ENCODE measurements at regions of chr1 and their contacts with region 1.

Region 1: DNA sequence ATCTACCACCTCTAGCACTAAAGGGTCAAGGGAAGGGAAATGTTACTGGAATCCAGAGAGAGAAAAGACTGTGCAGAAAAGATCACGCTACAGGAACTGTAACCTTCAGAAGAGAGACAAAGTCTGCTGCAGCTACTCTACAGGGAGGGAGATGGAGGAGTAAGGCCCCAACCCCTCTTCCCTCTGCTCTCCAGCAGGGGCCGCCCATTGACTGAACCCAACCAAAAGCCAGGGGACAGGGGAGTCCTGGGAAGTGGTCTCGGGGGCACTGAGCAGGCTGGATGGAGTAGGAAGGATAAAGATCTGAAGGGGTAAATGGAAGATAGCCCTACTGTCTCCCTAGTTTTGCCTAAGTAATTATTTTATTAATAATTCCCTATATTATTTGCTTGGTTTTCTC is 72.8 kb upstream of the NR5A2 start:
- DNase-seq: peak; percentile 74
- H3K4me3 ChIP-seq: no peak overlapping the region
- H3K27ac ChIP-seq: no peak overlapping the region
- H3K4me1 ChIP-seq: peaks cover 13% of the 10 kb centered on the region
- CTCF ChIP-seq: peak; percentile 95

Region 2: DNA sequence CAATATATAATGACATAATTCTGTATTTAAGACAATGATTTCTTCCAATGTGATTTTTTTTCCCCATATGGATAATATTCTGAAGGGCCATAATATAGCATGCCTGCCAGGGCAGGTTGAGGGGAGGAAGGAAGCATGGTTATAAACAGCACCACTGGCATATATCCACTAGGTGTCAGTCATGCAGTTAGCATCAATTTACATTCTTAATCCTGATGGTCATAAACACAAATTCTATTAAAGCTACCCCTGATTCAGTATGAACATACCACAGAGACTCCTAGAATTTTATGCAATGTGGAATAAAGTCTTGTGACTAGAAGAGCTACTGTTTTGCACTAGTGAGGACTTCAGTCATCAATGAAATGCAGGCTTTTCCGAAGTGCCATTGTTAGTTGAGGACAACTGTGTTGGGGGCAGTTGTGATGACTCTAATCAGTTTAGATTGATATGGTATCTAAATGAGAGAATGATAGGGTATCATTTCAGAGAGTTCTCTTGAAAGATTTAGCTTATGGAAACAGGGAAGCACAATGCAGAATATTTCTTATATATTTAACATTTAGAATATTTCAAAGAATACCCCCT is 269.9 kb before region 1 on chr1:
- CTCF ChIA-PET with region 1: no interaction called
- POLR2A ChIA-PET with region 1: no interaction called
- intact Hi-C with region 1: loop called (anchors 5 kb)
- DNase-seq: peak; percentile 62
- H3K4me3 ChIP-seq: no peak overlapping the region
- H3K27ac ChIP-seq: no peak overlapping the region
- H3K4me1 ChIP-seq: no peaks in the 10 kb centered on the region
- CTCF ChIP-seq: peak; percentile 93

Region 3: GRCh38 chr1:199976496-199977144 is 21.9 kb after region 1 on chr1:
- CTCF ChIA-PET with region 1: interaction called, 3 read pairs
- POLR2A ChIA-PET with region 1: interaction called, 3 read pairs
- intact Hi-C with region 1: loop called (anchors 2 kb)
- DNase-seq: peak; percentile 18
- H3K4me3 ChIP-seq: peak overlapping the region; percentile 31
- H3K27ac ChIP-seq: peak overlapping the region; percentile 98
- H3K4me1 ChIP-seq: peaks cover 60% of the 10 kb centered on the region
- CTCF ChIP-seq: no peak

Region 4: GRCh38 chr1:200038981-200039848 is 84.5 kb after region 1 on chr1:
- CTCF ChIA-PET with region 1: no interaction called
- POLR2A ChIA-PET with region 1: interaction called, 5 read pairs
- intact Hi-C with region 1: loop called (anchors 2 kb)
- DNase-seq: peak; percentile 31
- H3K4me3 ChIP-seq: peak overlapping the region; percentile 68
- H3K27ac ChIP-seq: no peak overlapping the region
- H3K4me1 ChIP-seq: peaks cover 6% of the 10 kb centered on the region
- CTCF ChIP-seq: no peak

Region 5: GRCh38 chr1:200258447-200259375 is 304.0 kb after region 1 on chr1:
- CTCF ChIA-PET with region 1: no interaction called
- POLR2A ChIA-PET with region 1: no interaction called
- intact Hi-C with region 1: loop called (anchors 5 kb)
- DNase-seq: peak; percentile 75
- H3K4me3 ChIP-seq: no peak overlapping the region
- H3K27ac ChIP-seq: no peak overlapping the region
- H3K4me1 ChIP-seq: no peaks in the 10 kb centered on the region
- CTCF ChIP-seq: peak; percentile 78

Region 6: DNA sequence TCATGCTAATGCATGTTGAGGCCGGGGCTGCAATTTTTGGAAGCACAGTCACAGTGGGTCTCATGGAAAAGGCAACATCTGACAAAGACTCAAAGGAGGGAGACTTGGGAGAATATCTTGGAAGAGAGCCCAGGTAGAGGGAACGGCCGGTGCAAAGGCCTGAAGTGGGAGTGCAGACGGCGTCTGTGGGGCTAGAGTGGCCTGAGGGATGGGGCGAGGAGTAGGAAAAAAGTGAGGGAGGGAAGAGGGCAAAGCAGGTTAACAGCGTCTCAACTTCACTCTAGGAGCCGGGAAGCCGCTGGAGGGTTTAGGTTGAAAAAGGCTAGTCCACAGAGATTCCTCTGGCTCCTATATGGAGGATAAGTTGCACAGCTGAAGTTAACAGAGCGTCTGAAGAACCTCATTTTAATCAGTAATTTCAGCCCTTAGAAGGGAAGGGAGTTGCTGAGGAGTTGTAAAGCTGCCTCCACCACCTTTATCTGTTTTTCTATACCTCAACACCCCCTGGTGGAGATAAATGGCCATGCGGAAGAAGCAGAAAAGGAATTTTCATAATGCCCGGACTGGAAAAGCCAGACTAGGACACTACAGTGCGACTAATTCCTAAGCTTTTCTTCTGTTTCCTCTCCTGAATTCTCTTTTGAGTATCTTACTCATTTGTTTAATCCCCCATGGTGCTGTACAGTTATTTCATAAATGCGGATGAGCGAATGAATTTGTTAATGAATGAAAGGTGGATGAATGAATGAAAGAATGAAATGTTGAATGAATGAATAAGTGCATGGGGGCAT is 533.9 kb after region 1 on chr1:
- CTCF ChIA-PET with region 1: no interaction called
- POLR2A ChIA-PET with region 1: no interaction called
- intact Hi-C with region 1: loop called (anchors 2 kb)
- DNase-seq: peak; percentile 74
- H3K4me3 ChIP-seq: no peak overlapping the region
- H3K27ac ChIP-seq: no peak overlapping the region
- H3K4me1 ChIP-seq: no peaks in the 10 kb centered on the region
- CTCF ChIP-seq: peak; percentile 95

Measured in OCI-LY7 (cell line).